ENCODE measurements at regions of chr19 and their contacts with region 1.

Region 1: GRCh38 chr19:29622138-29623070 is 16.3 kb downstream of the POP4 start:
- DNase-seq: peak; percentile 60
- ATAC-seq: peak; percentile 71
- H3K4me3 Mint-ChIP-seq: peak overlapping the region; percentile 81
- H3K27ac Mint-ChIP-seq: peak overlapping the region; percentile 95
- H3K4me1 Mint-ChIP-seq: peaks cover 67% of the 10 kb centered on the region
- H3K27me3 Mint-ChIP-seq: peaks cover 3% of the 10 kb centered on the region

Region 2: GRCh38 chr19:29671393-29672160 is 49.2 kb after region 1 on chr19:
- CTCF ChIA-PET with region 1: interaction called, 90 read pairs
- POLR2A ChIA-PET with region 1: interaction called, 19 read pairs
- DNase-seq: peak; percentile 92
- ATAC-seq: peak; percentile 63
- H3K4me3 Mint-ChIP-seq: peak overlapping the region; percentile 58
- H3K27ac Mint-ChIP-seq: peak overlapping the region; percentile 87
- H3K4me1 Mint-ChIP-seq: peaks cover 91% of the 10 kb centered on the region
- H3K27me3 Mint-ChIP-seq: no peaks in the 10 kb centered on the region

Region 3: GRCh38 chr19:29741786-29742185 is 119.4 kb after region 1 on chr19:
- CTCF ChIA-PET with region 1: no interaction called
- POLR2A ChIA-PET with region 1: no interaction called
- DNase-seq: no peak
- ATAC-seq: no peak
- H3K4me3 Mint-ChIP-seq: no peak overlapping the region
- H3K27ac Mint-ChIP-seq: no peak overlapping the region
- H3K4me1 Mint-ChIP-seq: no peaks in the 10 kb centered on the region
- H3K27me3 Mint-ChIP-seq: no peaks in the 10 kb centered on the region

Measured in activated CD8-positive, alpha-beta T cell treated with anti-CD3 and anti-CD28 coated beads, Interleukin-2, amount 10 ng/mL, durations not matched to agents 7 days and 5 days (primary cell).